ENCODE measurements at regions of chr21 and their contacts with region 1.

Region 1: DNA sequence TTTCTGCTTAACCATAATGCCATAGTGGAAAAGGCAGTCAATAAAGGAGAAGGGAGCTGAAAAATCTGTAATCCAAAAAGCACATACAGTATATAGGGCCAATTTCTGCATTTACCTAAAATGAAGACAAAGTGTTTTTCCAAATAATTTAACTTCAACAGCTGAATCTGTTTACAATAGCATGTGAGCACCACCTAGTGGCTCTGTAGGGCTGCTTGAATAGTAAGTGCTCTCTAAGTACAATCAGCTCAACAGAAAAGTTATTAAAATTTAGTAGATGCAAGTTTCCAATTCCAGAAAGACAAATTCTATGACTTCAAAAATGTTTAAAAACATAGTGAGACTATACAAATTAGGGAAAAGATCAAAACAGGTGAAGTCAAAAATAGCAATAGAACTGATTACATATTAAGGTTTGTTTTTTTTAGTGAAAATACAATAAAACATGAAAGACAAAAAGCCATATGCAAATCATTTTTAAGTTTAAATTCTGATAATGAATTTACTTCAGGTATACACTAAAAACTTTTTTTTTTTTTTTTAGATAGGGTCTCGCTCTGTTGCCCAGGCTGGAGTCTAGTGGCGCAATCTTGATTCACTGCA is 220.0 kb downstream of the SETD4 start:
- DNase-seq: peak; percentile 59
- H3K4me3 ChIP-seq: no peak overlapping the region
- H3K27ac ChIP-seq: no peak overlapping the region
- H3K4me1 ChIP-seq: peaks cover 2% of the 10 kb centered on the region
- H3K27me3 ChIP-seq: no peaks in the 10 kb centered on the region
- CTCF ChIP-seq: peak; percentile 85 to 92

Region 2: GRCh38 chr21:34693192-34693810 is 1147.0 kb before region 1 on chr21:
- CTCF ChIA-PET with region 1: no interaction called
- dilution Hi-C with region 1: no loop called
- in situ Hi-C with region 1: no loop called
- intact Hi-C with region 1: loop called (anchors 1 kb)
- DNase-seq: peak; percentile 39
- H3K4me3 ChIP-seq: no peak overlapping the region
- H3K27ac ChIP-seq: no peak overlapping the region
- H3K4me1 ChIP-seq: peaks cover 6% of the 10 kb centered on the region
- H3K27me3 ChIP-seq: no peaks in the 10 kb centered on the region
- CTCF ChIP-seq: peak; percentile 83 to 92

Region 3: GRCh38 chr21:34865928-34866284 is 974.4 kb before region 1 on chr21:
- CTCF ChIA-PET with region 1: no interaction called
- dilution Hi-C with region 1: no loop called
- in situ Hi-C with region 1: loop called in 1 of 2 experiments (anchors 10 kb)
- intact Hi-C with region 1: no loop called
- DNase-seq: no peak
- H3K4me3 ChIP-seq: no peak overlapping the region
- H3K27ac ChIP-seq: peak overlapping the region; percentile 3
- H3K4me1 ChIP-seq: peaks cover 55% of the 10 kb centered on the region
- H3K27me3 ChIP-seq: no peaks in the 10 kb centered on the region
- CTCF ChIP-seq: no peak

Region 4: GRCh38 chr21:35138665-35139381 is 701.5 kb before region 1 on chr21:
- CTCF ChIA-PET with region 1: no interaction called
- dilution Hi-C with region 1: no loop called
- in situ Hi-C with region 1: no loop called
- intact Hi-C with region 1: loop called (anchors 1 kb)
- DNase-seq: peak; percentile 100
- H3K4me3 ChIP-seq: no peak overlapping the region
- H3K27ac ChIP-seq: peak overlapping the region; percentile 99
- H3K4me1 ChIP-seq: peaks cover 45% of the 10 kb centered on the region
- H3K27me3 ChIP-seq: no peaks in the 10 kb centered on the region
- CTCF ChIP-seq: peak; percentile 26 to 51

Region 5: DNA sequence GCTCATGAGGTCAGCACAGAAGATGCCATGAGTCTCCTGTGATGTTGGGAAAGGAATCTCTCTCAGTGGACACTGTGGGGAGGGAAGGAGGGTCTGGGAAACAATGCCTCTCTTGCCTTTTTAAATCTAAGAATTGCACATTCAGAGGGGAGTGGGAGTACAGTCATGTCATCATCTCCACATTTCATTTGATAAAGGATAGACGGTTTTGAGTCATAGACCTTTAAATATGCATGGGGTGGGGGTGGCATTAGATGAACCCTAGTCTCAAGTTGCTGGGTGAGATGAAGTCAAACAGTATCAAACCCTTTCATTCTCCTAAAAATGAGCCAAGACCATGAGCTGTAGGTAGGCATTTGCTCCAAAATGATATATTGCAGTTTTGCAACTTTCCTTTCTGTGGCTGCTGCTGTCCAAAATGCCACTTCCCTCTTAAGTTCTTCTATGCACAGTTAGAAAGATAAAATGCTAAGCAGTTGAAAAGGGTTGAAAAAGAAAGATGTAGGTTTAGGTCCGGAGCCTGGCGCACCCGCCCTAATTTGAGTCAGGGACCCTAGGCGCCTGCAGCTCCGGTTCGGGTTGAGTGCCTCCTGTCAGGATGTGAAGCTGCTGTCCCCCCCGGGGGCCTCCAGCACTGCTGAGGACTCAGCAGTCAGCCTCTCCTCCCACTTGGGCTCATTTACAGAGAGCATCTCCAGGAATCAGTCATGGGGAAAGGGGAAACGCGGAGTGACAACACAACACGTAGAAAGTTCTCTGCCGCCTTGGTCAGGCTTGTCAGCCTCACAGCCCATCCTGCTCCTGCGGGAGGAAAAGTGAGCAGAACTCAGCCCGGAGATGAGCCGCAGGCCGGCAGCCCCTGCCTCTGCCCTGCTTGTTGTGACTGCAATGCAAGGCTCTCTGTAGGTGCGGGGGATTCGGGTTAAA is 311.9 kb before region 1 on chr21:
- CTCF ChIA-PET with region 1: no interaction called
- dilution Hi-C with region 1: no loop called
- in situ Hi-C with region 1: no loop called
- intact Hi-C with region 1: loop called (anchors 10 kb)
- DNase-seq: no peak
- H3K4me3 ChIP-seq: no peak overlapping the region
- H3K27ac ChIP-seq: no peak overlapping the region
- H3K4me1 ChIP-seq: peaks cover 19% of the 10 kb centered on the region
- H3K27me3 ChIP-seq: no peaks in the 10 kb centered on the region
- CTCF ChIP-seq: no peak

Region 6: DNA sequence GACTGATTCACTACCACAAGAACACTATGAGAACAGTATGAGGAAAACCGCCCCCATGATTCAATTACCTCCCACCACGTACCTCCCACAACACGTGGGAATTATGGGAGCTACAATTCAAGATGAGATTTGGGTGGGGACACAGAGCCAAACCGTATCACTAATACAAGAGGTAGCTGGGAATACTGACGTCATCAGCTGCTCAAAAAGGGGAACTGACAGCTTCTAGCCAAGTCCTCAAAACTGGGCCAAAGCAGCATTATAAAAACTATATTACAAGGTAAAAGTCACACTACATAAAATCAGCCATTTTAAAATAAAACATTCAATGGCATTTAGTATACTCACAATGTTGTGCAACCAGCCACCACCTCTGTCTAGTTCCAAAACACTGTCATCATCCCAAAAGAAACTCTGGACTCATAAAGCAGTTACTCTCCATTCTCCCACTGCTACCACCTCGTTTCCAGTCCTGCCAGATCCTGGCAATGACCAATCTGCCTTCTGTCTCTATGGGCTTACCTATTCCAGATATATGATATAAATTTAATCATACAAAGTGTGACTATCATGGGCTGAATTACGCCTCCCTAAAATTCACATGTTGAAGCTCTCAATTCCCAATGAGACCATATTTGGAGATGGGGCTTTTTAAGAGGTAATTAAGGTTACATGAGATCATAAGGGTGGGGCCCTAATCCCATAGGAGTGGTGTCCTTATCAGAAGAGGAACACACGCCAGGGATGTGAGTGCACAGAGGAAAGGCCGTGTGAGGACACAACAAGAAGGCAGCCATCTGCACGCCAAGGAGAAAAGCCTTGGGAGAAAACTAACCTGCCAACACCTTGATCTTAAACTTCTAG is 27.9 kb after region 1 on chr21:
- CTCF ChIA-PET with region 1: interaction called, 18 read pairs
- dilution Hi-C with region 1: no loop called
- in situ Hi-C with region 1: no loop called
- intact Hi-C with region 1: no loop called
- DNase-seq: no peak
- H3K4me3 ChIP-seq: no peak overlapping the region
- H3K27ac ChIP-seq: no peak overlapping the region
- H3K4me1 ChIP-seq: no peaks in the 10 kb centered on the region
- H3K27me3 ChIP-seq: no peaks in the 10 kb centered on the region
- CTCF ChIP-seq: no peak

Region 7: GRCh38 chr21:36028127-36029069 is 188.1 kb after region 1 on chr21:
- CTCF ChIA-PET with region 1: no interaction called
- dilution Hi-C with region 1: no loop called
- in situ Hi-C with region 1: loop called in 1 of 2 experiments (anchors 5 kb)
- intact Hi-C with region 1: loop called (anchors 1 kb)
- DNase-seq: peak; percentile 70
- H3K4me3 ChIP-seq: no peak overlapping the region
- H3K27ac ChIP-seq: no peak overlapping the region
- H3K4me1 ChIP-seq: peaks cover 11% of the 10 kb centered on the region
- H3K27me3 ChIP-seq: no peaks in the 10 kb centered on the region
- CTCF ChIP-seq: peak; percentile 96 to 97

Measured in mammary epithelial cell (primary cell).